Activated B cell treated with CpG ODN at 0.5 μM for 24 hours (primary cell): ENCODE measurements at regions of chr1 and their contacts with region 1.

Region 1: DNA sequence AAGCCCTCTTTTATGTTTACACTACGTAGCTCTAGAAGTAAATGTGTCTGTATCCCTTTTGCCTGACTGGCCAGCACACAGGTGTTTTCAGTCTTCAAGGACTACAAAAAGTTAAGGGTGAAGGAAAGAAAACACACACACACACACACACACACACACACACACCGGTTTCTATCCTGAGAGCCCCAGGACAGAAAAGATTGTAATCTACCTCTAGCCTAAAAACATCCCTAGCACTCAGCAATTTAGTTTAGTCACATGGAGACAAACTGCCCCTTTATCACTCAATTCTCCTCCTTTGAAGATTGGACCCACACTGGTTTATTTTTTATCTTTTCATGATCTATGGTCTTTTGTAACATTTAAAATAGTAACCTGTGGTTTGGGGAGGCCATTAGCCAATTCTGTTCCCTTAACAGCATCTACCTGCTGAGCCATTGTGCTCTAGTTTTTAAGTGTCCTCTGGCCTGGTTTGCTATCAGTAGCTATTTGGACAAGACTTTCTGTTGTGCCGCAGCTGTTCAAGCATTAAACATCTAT is 15.8 kb upstream of the TRIM45 start:
- DNase-seq: no peak
- ATAC-seq: no peak
- H3K4me3 Mint-ChIP-seq: no peak overlapping the region
- H3K27ac Mint-ChIP-seq: no peak overlapping the region
- H3K4me1 Mint-ChIP-seq: no peaks in the 10 kb centered on the region
- H3K27me3 Mint-ChIP-seq: peaks cover 8% of the 10 kb centered on the region
- CTCF ChIP-seq: no peak

Region 2: GRCh38 chr1:117512743-117513321 is 375.4 kb after region 1 on chr1:
- CTCF ChIA-PET with region 1: no interaction called
- POLR2A ChIA-PET with region 1: no interaction called
- intact Hi-C with region 1: no loop called
- DNase-seq: no peak
- ATAC-seq: no peak
- H3K4me3 Mint-ChIP-seq: no peak overlapping the region
- H3K27ac Mint-ChIP-seq: no peak overlapping the region
- H3K4me1 Mint-ChIP-seq: peaks cover 4% of the 10 kb centered on the region
- H3K27me3 Mint-ChIP-seq: no peaks in the 10 kb centered on the region
- CTCF ChIP-seq: no peak

Region 3: DNA sequence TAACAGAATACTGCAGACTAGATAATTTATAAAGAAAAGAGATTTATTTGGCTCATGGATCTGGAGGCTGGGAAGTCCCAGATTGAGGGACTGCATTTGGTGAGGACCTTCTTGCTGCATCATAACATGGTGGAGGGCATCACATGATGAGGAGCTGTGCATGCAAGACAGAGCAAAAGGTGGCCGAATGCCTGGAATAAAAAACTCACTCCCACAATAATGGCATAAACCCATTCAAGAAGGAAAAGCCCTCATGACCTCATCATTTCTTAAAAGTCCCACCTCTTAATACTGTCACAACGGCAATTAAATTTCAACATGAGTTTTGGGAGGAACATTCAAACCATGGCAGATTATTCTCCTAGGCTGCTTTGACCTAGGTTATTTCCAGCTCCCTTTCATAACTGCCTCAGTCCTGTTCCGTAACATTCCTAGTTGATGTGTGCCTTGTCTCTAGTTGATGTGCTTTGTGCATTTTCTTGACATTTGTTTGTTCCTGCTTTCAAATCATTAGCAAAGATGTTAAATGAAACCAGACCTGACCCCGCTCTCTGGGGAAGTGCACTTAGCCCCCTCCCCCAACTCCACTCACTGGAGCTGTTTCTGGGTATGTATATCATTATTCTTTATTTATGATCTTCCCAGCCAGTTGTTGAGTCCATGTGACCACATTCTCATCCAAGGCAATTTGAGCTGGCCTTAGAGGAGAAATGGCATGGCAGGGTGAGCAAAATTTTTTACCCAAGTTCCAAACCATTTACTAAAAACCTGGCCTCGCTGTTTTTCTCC is 643.5 kb after region 1 on chr1:
- CTCF ChIA-PET with region 1: no interaction called
- POLR2A ChIA-PET with region 1: no interaction called
- intact Hi-C with region 1: no loop called
- DNase-seq: no peak
- ATAC-seq: no peak
- H3K4me3 Mint-ChIP-seq: no peak overlapping the region
- H3K27ac Mint-ChIP-seq: no peak overlapping the region
- H3K4me1 Mint-ChIP-seq: peaks cover 4% of the 10 kb centered on the region
- H3K27me3 Mint-ChIP-seq: peaks cover 12% of the 10 kb centered on the region
- CTCF ChIP-seq: no peak

Region 4: GRCh38 chr1:117857434-117857833 is 720.0 kb after region 1 on chr1:
- CTCF ChIA-PET with region 1: no interaction called
- POLR2A ChIA-PET with region 1: no interaction called
- intact Hi-C with region 1: loop called (anchors 5 kb)
- DNase-seq: no peak
- ATAC-seq: no peak
- H3K4me3 Mint-ChIP-seq: no peak overlapping the region
- H3K27ac Mint-ChIP-seq: no peak overlapping the region
- H3K4me1 Mint-ChIP-seq: no peaks in the 10 kb centered on the region
- H3K27me3 Mint-ChIP-seq: no peaks in the 10 kb centered on the region
- CTCF ChIP-seq: no peak